AG04450 (cell line): ENCODE measurements at regions of chr4 and their contacts with region 1.

Region 1: GRCh38 chr4:8176547-8177399 is 18.2 kb upstream of the ABLIM2 start:
- DNase-seq: no peak
- H3K4me3 ChIP-seq: no peak overlapping the region
- H3K27ac ChIP-seq: no peak overlapping the region
- H3K27me3 ChIP-seq: peaks cover 29% of the 10 kb centered on the region
- CTCF ChIP-seq: peak; percentile 96

Region 2: GRCh38 chr4:8150152-8151090 is 26.4 kb before region 1 on chr4:
- CTCF ChIA-PET with region 1: no interaction called
- POLR2A ChIA-PET with region 1: no interaction called
- DNase-seq: no peak
- H3K4me3 ChIP-seq: no peak overlapping the region
- H3K27ac ChIP-seq: no peak overlapping the region
- H3K27me3 ChIP-seq: peaks cover 59% of the 10 kb centered on the region
- CTCF ChIP-seq: no peak

Region 3: DNA sequence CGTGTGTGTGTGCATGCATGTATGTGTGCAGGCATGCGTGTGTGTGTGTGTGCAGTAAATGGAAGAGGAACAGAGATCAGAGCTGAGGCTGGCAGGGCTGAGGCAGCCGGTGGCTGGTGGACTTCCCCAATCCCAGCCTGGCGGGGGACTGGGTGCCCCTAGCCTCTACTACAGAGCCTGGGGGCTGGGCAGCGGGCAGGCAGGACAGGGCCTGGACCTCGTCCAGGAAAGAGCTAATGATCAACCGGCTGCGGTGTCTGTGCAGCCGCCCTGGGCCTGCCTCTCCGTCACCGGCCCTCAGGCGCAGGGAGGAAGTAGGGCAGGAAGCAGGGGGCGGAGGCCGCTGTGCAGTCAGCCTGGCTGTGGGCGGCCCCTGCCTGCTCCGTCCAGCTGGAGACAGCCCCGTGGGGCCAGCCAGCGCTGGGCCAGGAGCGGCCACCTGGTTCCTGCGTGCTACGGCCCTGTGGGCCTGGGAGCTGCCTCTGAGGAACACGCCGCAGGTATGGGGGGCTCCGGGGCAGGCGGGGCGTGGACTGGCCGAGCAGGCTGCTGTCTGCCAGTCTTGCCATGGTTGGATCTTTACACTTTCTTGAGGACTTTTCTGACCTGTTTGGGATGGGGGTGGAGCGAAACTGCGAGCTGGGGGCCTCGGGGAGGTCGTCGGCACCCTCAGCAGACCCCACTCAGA is 22.3 kb after region 1 on chr4 and contains the start of gene SH3TC1:
- CTCF ChIA-PET with region 1: interaction called, 16 read pairs
- POLR2A ChIA-PET with region 1: interaction called, 3 read pairs
- DNase-seq: peak; percentile 62
- H3K4me3 ChIP-seq: peak within 1 kb of the TSS; percentile 46
- H3K27ac ChIP-seq: peak within 1 kb of the TSS; percentile 21
- H3K27me3 ChIP-seq: peaks cover 18% of the 10 kb centered on the region
- CTCF ChIP-seq: no peak
- polyA plus RNA-seq, gene SH3TC1: 0.98 and 1.4 TPM in 2 replicates

Region 4: GRCh38 chr4:8215001-8215427 is 38.2 kb after region 1 on chr4:
- CTCF ChIA-PET with region 1: interaction called, 18 read pairs
- POLR2A ChIA-PET with region 1: no interaction called
- DNase-seq: peak; percentile 72
- H3K4me3 ChIP-seq: no peak overlapping the region
- H3K27ac ChIP-seq: no peak overlapping the region
- H3K27me3 ChIP-seq: peaks cover 15% of the 10 kb centered on the region
- CTCF ChIP-seq: no peak

Region 5: GRCh38 chr4:8221476-8221875 is 44.7 kb after region 1 on chr4:
- CTCF ChIA-PET with region 1: interaction called, 11 read pairs
- POLR2A ChIA-PET with region 1: no interaction called
- DNase-seq: no peak
- H3K4me3 ChIP-seq: no peak overlapping the region
- H3K27ac ChIP-seq: no peak overlapping the region
- H3K27me3 ChIP-seq: peaks cover 2% of the 10 kb centered on the region
- CTCF ChIP-seq: no peak

Region 6: DNA sequence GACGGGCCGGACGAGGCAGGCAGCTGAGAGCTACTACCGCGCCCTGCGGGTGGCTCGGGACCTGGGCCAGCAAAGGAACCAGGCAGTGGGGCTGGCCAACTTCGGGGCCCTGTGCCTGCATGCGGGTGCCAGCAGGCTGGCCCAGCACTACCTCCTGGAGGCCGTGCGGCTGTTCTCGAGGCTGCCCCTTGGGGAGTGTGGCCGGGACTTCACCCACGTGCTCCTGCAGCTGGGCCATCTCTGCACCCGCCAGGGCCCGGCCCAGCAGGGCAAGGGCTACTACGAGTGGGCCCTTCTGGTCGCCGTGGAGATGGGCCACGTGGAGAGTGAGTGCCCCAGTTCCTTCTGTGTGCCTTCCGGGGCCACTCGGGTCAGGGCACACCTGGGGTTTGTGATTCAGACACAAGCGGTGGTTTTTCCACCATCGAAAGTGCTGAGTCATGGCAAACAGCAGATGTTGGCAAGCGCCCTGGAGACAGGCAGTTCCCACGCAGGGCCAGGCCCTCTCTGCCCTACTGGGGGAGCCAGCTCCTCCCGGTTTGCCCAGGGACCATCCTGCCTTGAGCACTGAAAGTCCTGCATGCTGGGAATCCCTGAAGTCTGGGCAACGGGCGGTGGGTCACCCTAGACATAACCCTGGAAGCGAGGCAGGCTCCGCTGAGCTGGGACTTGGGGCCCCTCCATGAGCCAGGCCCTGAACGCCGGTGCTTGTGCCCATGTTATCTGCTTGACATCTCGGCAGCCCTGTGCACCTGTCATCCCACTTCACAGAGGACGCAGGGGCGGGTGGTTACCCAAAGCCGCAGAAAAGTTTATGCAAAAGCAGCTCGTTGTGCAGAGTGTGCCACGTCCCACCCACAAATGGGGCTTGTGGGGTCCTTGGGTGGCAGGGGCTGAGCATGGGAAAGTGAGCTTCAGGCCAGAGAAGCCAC is 51.8 kb after region 1 on chr4:
- CTCF ChIA-PET with region 1: interaction called, 12 read pairs
- POLR2A ChIA-PET with region 1: no interaction called
- DNase-seq: peak; percentile 55
- H3K4me3 ChIP-seq: no peak overlapping the region
- H3K27ac ChIP-seq: no peak overlapping the region
- H3K27me3 ChIP-seq: peaks cover 2% of the 10 kb centered on the region
- CTCF ChIP-seq: no peak

Region 7: DNA sequence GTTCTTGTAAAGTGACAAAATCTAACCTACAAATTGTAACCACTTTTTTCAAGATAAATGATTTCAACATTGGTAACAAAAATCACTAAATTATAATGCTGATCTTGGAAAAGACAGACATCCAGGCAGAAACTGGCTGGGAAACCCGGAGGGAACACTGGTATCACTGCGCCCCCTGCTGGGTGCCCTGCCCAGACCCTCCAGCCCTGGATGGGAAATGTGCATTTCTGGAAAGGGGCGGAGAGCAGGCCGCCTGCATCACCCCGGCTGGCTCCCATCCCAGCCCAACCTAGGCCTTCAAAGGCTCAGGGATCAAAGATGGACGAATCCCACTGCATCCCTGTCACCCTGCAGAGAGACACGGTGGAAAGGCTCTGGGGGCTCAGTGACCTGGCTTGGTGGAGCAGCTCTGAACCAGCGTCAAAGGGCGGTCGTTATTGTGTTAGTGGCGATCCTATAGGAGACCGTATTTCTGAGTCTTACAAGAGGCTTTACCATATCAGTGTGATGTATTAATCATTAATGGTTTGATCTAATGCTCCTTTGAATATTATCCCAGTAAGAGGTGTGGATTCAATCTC is 226.5 kb after region 1 on chr4:
- CTCF ChIA-PET with region 1: interaction called, 37 read pairs
- POLR2A ChIA-PET with region 1: no interaction called
- DNase-seq: peak; percentile 66
- H3K4me3 ChIP-seq: no peak overlapping the region
- H3K27ac ChIP-seq: no peak overlapping the region
- H3K27me3 ChIP-seq: no peaks in the 10 kb centered on the region
- CTCF ChIP-seq: peak; percentile 93

Region 8: DNA sequence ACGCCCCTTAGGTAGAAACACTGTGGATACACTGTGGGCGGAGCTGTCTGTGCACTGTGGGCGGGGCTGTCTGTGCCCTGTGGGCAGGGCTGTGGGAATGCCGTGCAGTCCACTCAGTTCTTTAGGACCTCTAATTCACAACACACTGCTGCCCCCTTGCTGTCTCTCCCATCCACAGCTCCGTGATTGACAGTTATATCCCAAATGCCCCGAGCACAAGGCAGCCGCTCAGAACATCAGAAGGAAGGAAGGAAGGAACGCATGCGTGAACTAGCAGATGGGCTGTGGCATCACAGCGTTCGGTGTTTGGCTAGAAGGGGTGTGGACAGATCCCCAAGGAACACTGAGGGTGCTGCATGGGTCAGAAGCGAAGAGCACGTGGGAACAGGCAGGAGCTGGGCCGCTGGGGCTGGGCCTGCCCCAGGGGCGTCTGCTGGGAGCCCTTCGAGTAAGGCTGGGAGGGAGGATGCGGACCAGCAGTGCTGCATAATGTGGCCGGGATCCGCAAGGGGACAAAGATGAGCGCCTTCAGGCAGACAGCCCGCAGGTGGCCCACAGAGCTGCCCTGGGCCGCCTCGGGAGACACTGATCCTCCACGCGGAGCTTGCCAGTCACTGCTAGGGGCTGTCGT is 234.0 kb after region 1 on chr4:
- CTCF ChIA-PET with region 1: interaction called, 37 read pairs
- POLR2A ChIA-PET with region 1: no interaction called
- DNase-seq: no peak
- H3K4me3 ChIP-seq: no peak overlapping the region
- H3K27ac ChIP-seq: no peak overlapping the region
- H3K27me3 ChIP-seq: no peaks in the 10 kb centered on the region
- CTCF ChIP-seq: peak; percentile 38

Region 9: GRCh38 chr4:8488791-8489369 is 312.1 kb after region 1 on chr4:
- CTCF ChIA-PET with region 1: no interaction called
- POLR2A ChIA-PET with region 1: no interaction called
- DNase-seq: no peak
- H3K4me3 ChIP-seq: no peak overlapping the region
- H3K27ac ChIP-seq: no peak overlapping the region
- H3K27me3 ChIP-seq: peaks cover 12% of the 10 kb centered on the region
- CTCF ChIP-seq: no peak